Right cardiac atrium (tissue), 5 donors: ENCODE measurements at regions of chr5 and their contacts with region 1.

Region 1: DNA sequence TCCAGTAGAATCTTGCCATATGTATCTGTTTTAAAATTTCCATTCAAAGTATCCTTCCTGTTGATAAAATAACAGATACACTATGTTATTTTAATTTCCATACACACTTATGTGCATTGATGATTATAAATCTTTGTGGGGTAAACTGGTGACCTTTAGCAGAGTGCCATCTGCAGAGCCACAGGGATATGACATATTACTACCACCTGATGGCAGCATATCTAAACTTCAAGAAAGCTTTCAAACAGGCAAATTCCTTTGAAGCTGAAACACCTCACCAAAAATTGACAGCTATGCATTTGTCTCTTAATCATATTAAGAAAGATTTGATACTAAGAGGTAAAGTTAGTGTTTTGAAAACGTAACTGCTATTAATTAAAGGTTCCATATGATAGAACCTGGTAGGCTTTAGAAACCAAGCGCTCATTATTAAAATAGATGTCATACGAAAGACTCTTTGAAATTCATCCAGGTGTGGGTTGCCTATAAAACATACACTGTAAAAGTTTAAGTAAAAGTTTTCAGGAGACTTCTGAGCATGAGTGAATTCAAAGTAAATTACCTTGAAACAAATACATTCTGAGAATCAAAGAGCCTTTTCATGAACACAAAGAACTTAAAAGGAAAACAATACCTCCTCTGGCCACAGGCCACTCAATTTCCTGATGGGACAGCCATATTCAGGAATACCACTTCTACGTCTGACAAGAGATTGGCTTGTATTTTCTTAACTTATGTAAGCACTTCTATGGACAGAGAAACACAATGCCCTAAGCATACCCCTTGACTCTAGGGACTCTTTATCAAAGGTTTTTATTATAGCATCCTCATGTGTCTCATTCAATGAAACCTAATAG is 93.3 kb downstream of the KIAA0825 start:
- DNase-seq: no peak
- ATAC-seq: peak in 1 of 2 donors; percentile 57
- H3K4me3 ChIP-seq: no peak overlapping the region
- H3K27ac ChIP-seq: no peak overlapping the region
- H3K4me1 ChIP-seq: no peaks in the 10 kb centered on the region
- H3K27me3 ChIP-seq: no peaks in the 10 kb centered on the region

Region 2: DNA sequence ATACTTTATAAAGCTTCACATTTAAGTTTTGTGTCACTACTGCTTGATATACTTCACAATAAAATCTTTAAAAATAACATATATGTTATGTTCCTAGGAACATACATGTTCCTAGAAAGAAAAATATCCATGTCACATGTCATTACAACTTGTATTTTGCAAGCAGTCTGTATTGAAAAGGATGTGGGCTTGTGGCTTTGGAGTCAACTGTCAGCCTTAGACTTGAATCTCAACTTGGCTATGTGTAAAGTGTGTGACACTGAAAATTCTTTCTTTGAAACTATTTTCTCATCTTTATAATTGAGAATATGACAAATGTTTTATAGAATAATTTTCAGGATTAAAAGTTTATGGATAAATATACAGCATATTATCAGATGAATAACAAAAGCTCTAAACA is 179.8 kb before region 1 on chr5:
- intact Hi-C with region 1: no loop called
- DNase-seq: no peak
- ATAC-seq: no peak
- H3K4me3 ChIP-seq: no peak overlapping the region
- H3K27ac ChIP-seq: no peak overlapping the region
- H3K4me1 ChIP-seq: no peaks in the 10 kb centered on the region
- H3K27me3 ChIP-seq: no peaks in the 10 kb centered on the region

Region 3: DNA sequence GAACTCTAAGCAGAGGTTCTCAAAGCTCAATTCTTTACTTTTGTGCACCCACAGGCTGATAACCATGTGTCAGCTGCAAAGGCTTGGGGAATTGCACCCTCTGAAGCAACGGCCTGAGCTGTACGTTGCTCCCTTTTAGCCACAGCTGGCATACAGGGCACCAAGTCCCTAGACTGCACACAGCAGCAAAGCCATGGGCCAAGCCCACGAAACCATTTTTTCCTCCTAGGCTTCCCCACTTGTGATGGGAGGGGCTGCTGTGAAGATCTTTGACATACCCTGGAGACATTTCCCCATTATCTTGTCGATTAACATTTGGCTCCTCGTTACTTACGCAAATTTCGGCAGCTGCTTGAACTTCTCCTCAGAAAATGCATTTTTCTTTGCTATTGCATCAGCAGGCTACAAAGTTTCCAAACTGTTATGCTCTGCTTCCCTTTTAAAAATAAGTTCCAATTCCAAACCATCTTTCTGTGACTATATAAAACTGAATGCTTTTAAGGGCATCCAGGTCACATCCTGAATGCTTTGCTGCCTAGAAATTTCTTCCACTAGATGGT is 70.3 kb after region 1 on chr5:
- intact Hi-C with region 1: no loop called
- DNase-seq: no peak
- ATAC-seq: no peak
- H3K4me3 ChIP-seq: no peak overlapping the region
- H3K27ac ChIP-seq: no peak overlapping the region
- H3K4me1 ChIP-seq: no peaks in the 10 kb centered on the region
- H3K27me3 ChIP-seq: no peaks in the 10 kb centered on the region

Region 4: GRCh38 chr5:94618493-94619328 is 93.6 kb after region 1 on chr5 and contains the starts of genes KIAA0825 and SLF1:
- intact Hi-C with region 1: loop called in 1 of 4 experiments (anchors 5 kb)
- DNase-seq: peak; percentile 87 to 94 (median 93)
- ATAC-seq: peak; percentile 99
- H3K4me3 ChIP-seq: peak within 1 kb of the TSS; percentile 89
- H3K27ac ChIP-seq: peak within 1 kb of the TSS; percentile 80
- H3K4me1 ChIP-seq: no peaks in the 10 kb centered on the region
- H3K27me3 ChIP-seq: no peaks in the 10 kb centered on the region
- total RNA-seq, gene KIAA0825: 3.1 to 4.2 (median 3.6) TPM
- total RNA-seq, gene SLF1: 4.8 to 6.9 (median 5.9) TPM

Region 5: GRCh38 chr5:94645053-94645452 is 120.0 kb after region 1 on chr5:
- intact Hi-C with region 1: no loop called
- DNase-seq: no peak
- ATAC-seq: no peak
- H3K4me3 ChIP-seq: no peak overlapping the region
- H3K27ac ChIP-seq: no peak overlapping the region
- H3K4me1 ChIP-seq: no peaks in the 10 kb centered on the region
- H3K27me3 ChIP-seq: no peaks in the 10 kb centered on the region

Region 6: GRCh38 chr5:94731471-94731870 is 206.4 kb after region 1 on chr5:
- intact Hi-C with region 1: loop called in 3 of 4 experiments (anchors 10 kb)
- DNase-seq: no peak
- ATAC-seq: no peak
- H3K4me3 ChIP-seq: no peak overlapping the region
- H3K27ac ChIP-seq: no peak overlapping the region
- H3K4me1 ChIP-seq: no peaks in the 10 kb centered on the region
- H3K27me3 ChIP-seq: no peaks in the 10 kb centered on the region

Region 7: DNA sequence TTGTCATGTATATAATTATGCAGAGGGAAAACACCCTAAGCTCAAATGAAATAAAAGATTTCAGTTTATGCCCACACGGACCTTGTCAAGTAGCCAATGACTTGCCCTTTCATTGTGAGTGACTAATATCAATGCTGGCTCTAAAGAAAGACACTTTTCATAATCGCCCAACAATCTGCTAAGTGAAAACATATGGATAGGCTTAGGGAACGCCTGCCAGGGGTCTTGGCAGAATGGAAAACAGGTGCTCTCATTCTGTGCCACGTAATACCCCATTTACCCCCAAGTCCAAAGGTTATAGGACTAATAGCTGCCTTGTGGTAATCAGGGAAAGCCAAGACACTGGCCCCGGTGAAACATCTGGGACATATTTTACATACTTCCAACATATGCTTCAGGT is 251.1 kb after region 1 on chr5:
- intact Hi-C with region 1: no loop called
- DNase-seq: no peak
- ATAC-seq: no peak
- H3K4me3 ChIP-seq: no peak overlapping the region
- H3K27ac ChIP-seq: no peak overlapping the region
- H3K4me1 ChIP-seq: no peaks in the 10 kb centered on the region
- H3K27me3 ChIP-seq: no peaks in the 10 kb centered on the region